ENCODE measurements at regions of chr14 and their contacts with region 1.

Region 1: GRCh38 chr14:75293920-75294642 is 15.5 kb downstream of the FOS start:
- DNase-seq: peak; percentile 96 to 98 (median 97)
- ATAC-seq: peak; percentile 93 to 95 (median 93)
- H3K4me3 ChIP-seq: peak overlapping the region; percentile 43 to 77 (median 61)
- H3K27ac ChIP-seq: peak overlapping the region; percentile 76 to 98 (median 94)
- H3K4me1 ChIP-seq: peaks cover 0 to 53% (median 21%) of the 10 kb centered on the region in 12 donors
- H3K27me3 ChIP-seq: no peaks in the 10 kb centered on the region
- CTCF ChIP-seq: peak in 3 of 12 donors; percentile 6 to 26 (median 11)
- POLR2A ChIP-seq: peak; percentile 29 to 57

Region 2: GRCh38 chr14:74804219-74804826 is 489.8 kb before region 1 on chr14:
- intact Hi-C with region 1: no loop called
- DNase-seq: no peak
- ATAC-seq: peak in 2 of 4 donors; percentile 56
- H3K4me3 ChIP-seq: no peak overlapping the region
- H3K27ac ChIP-seq: no peak overlapping the region
- H3K4me1 ChIP-seq: no peaks in the 10 kb centered on the region
- H3K27me3 ChIP-seq: no peaks in the 10 kb centered on the region
- CTCF ChIP-seq: peak; percentile 19 to 64 (median 40)
- POLR2A ChIP-seq: no peak

Region 3: DNA sequence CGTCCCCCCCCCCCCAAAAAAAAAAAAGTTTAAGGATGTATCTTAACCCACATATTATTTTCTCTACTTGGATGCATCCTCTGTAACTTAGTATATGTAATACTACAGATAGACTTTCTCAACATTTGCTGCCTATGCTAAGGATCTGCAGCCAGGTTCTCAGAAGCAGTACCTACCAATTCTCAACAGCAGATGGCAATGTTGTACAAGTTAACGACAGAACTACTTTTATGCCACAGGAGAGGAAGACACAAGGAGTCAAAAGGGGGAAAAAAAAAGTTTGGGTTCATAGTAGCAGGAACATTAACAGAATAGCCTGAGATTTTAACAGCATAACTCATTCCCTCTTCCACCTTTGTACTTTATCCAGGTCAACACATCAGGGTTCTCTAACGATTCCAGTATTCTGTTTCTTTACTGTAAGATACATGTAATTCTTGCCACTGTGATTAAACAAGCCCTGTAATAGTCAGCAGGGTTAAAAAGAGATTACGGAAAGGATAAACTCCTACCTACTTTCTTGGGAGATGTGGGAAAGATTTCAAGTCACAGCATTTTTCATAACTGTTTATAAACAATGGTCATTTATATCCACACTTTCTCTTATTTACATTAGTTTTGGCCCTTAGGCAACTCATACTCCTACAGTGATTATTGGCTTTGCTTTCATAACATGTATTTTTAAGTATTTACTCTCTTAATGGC is 161.5 kb before region 1 on chr14:
- intact Hi-C with region 1: loop called in 6 of 10 experiments (anchors 1 to 2 kb)
- DNase-seq: peak in 2 of 5 donors; percentile 52 to 60
- ATAC-seq: peak in 3 of 4 donors; percentile 75 to 87 (median 81)
- H3K4me3 ChIP-seq: no peak overlapping the region
- H3K27ac ChIP-seq: peak overlapping the region in 3 of 12 donors; percentile 29 to 43 (median 33)
- H3K4me1 ChIP-seq: peaks cover 0 to 19% (median 11%) of the 10 kb centered on the region in 12 donors
- H3K27me3 ChIP-seq: no peaks in the 10 kb centered on the region
- CTCF ChIP-seq: peak; percentile 60 to 83 (median 71)
- POLR2A ChIP-seq: no peak

Region 4: GRCh38 chr14:75158843-75159614 is 135.1 kb before region 1 on chr14:
- intact Hi-C with region 1: no loop called
- DNase-seq: no peak
- ATAC-seq: no peak
- H3K4me3 ChIP-seq: no peak overlapping the region
- H3K27ac ChIP-seq: no peak overlapping the region
- H3K4me1 ChIP-seq: peaks cover 0 to 41% (median 22%) of the 10 kb centered on the region in 12 donors
- H3K27me3 ChIP-seq: no peaks in the 10 kb centered on the region
- CTCF ChIP-seq: no peak
- POLR2A ChIP-seq: no peak

Region 5: DNA sequence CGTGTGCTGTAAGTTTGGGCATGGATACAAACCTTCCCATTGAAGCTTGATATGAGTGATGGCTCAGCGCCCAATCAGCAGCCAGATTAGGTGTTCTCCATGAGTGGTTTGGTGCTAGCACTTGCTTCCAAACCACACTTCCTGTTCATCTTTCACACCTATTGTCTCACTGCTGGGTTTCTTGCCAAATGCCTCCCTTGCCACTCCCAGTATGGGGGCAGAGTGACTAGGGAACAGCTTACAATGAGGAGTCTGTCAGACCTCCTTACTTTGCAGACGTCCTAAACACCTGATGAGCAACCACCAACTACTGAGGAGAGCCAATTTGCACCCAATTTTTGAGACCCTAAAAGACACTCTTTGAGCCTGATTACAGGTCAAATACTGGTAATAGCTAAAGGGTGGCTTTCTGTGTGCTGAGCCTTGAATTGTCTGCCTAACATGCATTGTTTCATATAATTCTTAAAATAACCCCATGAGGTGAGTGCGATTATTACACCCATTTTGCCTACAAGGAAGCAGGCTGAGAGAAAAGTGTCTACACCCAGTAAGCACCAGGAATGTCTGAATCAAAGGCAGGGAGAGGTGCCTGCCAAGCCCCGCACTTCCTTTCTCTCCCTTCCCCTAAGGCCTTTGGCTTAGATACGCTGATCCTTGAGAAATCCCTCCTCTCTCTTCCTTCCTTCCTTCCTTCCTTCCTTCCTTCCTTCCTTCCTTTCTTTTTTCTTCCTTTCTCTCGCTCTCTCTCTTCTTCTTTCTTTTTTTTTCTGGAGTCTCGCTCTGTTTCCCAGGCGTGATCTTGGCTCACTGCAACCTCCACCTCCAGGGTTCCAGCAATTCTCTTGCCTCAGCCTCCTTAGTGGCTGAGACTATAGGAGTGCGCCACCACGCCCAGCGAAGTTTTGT is 63.7 kb before region 1 on chr14:
- intact Hi-C with region 1: loop called in 4 of 10 experiments (anchors 5 to 10 kb)
- DNase-seq: peak in 2 of 5 donors; percentile 39 to 76
- ATAC-seq: peak in 3 of 4 donors; percentile 25 to 34 (median 29)
- H3K4me3 ChIP-seq: no peak overlapping the region
- H3K27ac ChIP-seq: peak overlapping the region in 6 of 12 donors; percentile 6 to 62 (median 44)
- H3K4me1 ChIP-seq: peaks cover 0 to 61% (median 10%) of the 10 kb centered on the region in 12 donors
- H3K27me3 ChIP-seq: no peaks in the 10 kb centered on the region
- CTCF ChIP-seq: peak in 6 of 12 donors; percentile 4 to 30 (median 18)
- POLR2A ChIP-seq: no peak

Region 6: DNA sequence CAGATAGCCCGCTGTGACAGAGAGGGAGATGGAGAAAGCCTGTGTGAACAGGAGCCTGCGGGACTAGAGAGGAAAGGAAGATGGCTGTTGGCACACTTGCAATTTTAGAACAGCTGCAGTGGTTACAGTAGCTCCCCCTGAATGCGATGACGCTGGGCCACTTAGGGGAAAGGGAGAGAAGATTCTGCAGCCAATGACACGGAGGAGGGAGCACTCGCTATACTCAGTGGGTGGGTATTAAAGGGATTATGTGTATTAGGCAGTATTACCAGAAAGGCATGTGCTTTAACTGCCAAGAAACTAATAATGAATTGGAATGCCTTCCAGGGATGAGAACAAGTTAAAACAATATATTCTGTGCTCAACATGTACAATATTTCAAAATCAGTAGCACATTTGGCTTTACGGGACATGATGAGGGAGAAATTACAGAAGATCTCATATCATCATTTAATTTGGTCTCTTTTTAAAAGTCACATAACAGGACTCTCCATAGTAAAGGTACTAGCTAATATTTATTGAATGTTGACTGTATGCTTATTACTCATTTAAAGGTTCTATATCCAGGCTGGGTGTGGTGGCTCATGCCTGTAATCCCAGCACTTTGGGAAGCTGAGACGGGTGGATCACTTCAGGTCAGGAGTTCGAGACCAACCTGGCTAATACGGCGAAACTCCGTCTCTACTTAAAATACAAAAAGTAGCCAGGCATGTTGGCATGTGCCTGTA is 51.4 kb before region 1 on chr14:
- intact Hi-C with region 1: loop called in 8 of 10 experiments (anchors 1 to 10 kb)
- DNase-seq: peak in 3 of 5 donors; percentile 41 to 45 (median 45)
- ATAC-seq: peak in 3 of 4 donors; percentile 8 to 43 (median 27)
- H3K4me3 ChIP-seq: no peak overlapping the region
- H3K27ac ChIP-seq: no peak overlapping the region
- H3K4me1 ChIP-seq: peaks cover 0 to 21% (median 18%) of the 10 kb centered on the region in 12 donors
- H3K27me3 ChIP-seq: no peaks in the 10 kb centered on the region
- CTCF ChIP-seq: no peak
- POLR2A ChIP-seq: no peak

Region 7: GRCh38 chr14:75249251-75249957 is 44.7 kb before region 1 on chr14:
- intact Hi-C with region 1: loop called in 3 of 10 experiments (anchors 5 to 10 kb)
- DNase-seq: no peak
- ATAC-seq: peak in 2 of 4 donors; percentile 6 to 23
- H3K4me3 ChIP-seq: no peak overlapping the region
- H3K27ac ChIP-seq: peak overlapping the region in 1 of 12 donors; percentile 44
- H3K4me1 ChIP-seq: peaks cover 0 to 47% (median 5%) of the 10 kb centered on the region in 12 donors
- H3K27me3 ChIP-seq: no peaks in the 10 kb centered on the region
- CTCF ChIP-seq: no peak
- POLR2A ChIP-seq: no peak

Region 8: DNA sequence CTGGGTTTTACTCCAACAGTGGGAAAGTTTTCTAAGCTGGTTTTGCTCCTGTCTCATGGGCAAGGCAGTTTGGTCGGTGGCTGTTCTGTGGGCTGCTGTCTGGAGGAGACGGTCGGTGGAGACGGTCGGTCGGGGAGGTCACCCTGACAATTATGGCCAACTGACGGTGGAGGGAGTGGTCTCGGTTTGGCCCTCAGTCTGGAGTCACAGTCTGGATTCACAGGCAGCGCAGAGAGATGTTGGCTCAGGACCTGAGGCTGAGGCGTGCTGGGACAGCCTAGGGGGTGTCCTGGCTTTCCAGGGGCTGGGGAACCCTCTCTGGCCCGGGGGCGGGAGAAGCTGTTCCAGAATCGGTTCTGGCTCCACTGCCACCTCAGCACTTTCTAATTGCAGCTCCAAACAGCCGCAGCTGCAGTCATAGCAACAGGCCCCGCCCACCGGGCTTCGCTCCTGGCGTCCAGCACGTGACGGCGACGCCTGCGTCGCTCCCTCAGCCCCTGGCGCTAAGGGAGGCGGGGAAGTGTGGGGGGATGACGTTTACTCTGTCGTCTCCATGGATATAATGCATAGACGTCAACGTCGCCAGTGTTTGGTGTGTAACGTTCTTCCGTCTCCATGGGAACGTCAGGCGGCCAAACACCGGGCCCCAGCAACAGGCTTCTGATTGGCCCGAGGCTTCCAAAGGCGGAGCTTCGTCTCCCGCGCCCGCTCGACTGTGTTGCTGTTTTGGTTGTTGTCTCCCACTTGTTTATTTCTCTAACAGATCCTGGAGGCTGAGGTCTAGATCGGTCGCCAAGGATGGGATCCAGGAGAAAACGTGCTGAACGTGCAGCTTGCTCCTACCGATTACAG is 35.2 kb before region 1 on chr14:
- intact Hi-C with region 1: loop called in 5 of 10 experiments (anchors 2 to 5 kb)
- DNase-seq: peak; percentile 99 to 100 (median 100)
- ATAC-seq: peak; percentile 95 to 98 (median 97)
- H3K4me3 ChIP-seq: peak overlapping the region; percentile 11 to 61 (median 49)
- H3K27ac ChIP-seq: peak overlapping the region; percentile 87 to 98 (median 95)
- H3K4me1 ChIP-seq: peaks cover 0 to 40% (median 26%) of the 10 kb centered on the region in 12 donors
- H3K27me3 ChIP-seq: no peaks in the 10 kb centered on the region
- CTCF ChIP-seq: no peak
- POLR2A ChIP-seq: peak in 1 of 2 donors; percentile 72

Region 9: GRCh38 chr14:75278422-75279161 is 15.5 kb before region 1 on chr14 and contains the start of gene FOS:
- intact Hi-C with region 1: loop called in 6 of 10 experiments (anchors 1 to 2 kb)
- DNase-seq: peak; percentile 94 to 95 (median 94)
- ATAC-seq: peak; percentile 73 to 82 (median 80)
- H3K4me3 ChIP-seq: peak within 1 kb of the TSS; percentile 56 to 98 (median 88)
- H3K27ac ChIP-seq: peak within 1 kb of the TSS; percentile 91 to 100 (median 99)
- H3K4me1 ChIP-seq: peaks cover 6 to 71% (median 32%) of the 10 kb centered on the region in 12 donors
- H3K27me3 ChIP-seq: no peaks in the 10 kb centered on the region
- CTCF ChIP-seq: no peak
- POLR2A ChIP-seq: peak; percentile 85 to 99
- total RNA-seq, gene FOS: 6.5 to 549 (median 28.6) TPM

Measured in heart left ventricle (tissue), 16 donors.